ENCODE measurements at regions of chr1 and their contacts with region 1.

Region 1: DNA sequence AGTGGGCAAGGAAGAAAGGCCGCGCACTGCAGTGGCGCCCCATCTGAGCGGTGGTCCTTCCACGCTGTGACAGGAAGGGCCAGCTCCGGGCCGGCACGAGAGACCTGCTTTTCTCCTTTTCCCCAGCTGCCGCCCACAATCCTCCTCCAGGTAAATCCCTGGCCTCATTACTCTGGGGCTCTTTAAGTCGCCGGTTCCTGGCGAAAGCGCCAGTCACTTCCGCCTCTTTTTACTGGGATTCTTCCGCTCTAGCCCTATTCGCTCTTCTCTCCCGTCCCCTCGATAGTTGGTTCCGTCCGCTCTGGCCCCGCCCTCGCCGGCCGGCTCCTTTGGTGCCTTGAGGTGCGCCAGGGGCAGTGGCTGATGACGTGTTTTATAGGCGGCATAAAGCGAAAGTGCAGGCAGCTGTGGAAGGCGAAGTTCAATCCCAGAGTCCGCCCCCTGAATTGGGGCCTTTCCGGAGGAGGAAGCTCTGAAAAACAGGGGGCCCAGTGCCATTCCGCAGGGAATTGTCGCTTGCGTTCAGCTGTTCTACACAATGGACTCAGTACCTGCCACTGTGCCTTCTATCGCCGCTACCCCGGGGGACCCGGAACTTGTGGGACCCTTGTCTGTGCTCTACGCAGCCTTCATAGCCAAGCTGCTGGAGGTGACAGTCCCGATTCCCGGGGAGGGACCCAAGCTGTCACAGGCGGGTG is 26.2 kb downstream of the MIA3 start:
- DNase-seq: peak; percentile 96
- H3K4me3 ChIP-seq: peak overlapping the region; percentile 87
- H3K27ac ChIP-seq: peak overlapping the region; percentile 46
- H3K4me1 ChIP-seq: peaks cover 15% of the 10 kb centered on the region
- CTCF ChIP-seq: no peak

Region 2: GRCh38 chr1:222589462-222590302 is 54.4 kb before region 1 on chr1 and contains the start of gene TAF1A:
- CTCF ChIA-PET with region 1: no interaction called
- POLR2A ChIA-PET with region 1: interaction called, 13 read pairs
- intact Hi-C with region 1: loop called (anchors 1 kb)
- DNase-seq: peak; percentile 88
- H3K4me3 ChIP-seq: peak within 1 kb of the TSS; percentile 80
- H3K27ac ChIP-seq: peak within 1 kb of the TSS; percentile 43
- H3K4me1 ChIP-seq: peaks cover 20% of the 10 kb centered on the region
- CTCF ChIP-seq: no peak
- total RNA-seq, gene TAF1A: 10.9 and 13.3 TPM in 2 replicates

Region 3: DNA sequence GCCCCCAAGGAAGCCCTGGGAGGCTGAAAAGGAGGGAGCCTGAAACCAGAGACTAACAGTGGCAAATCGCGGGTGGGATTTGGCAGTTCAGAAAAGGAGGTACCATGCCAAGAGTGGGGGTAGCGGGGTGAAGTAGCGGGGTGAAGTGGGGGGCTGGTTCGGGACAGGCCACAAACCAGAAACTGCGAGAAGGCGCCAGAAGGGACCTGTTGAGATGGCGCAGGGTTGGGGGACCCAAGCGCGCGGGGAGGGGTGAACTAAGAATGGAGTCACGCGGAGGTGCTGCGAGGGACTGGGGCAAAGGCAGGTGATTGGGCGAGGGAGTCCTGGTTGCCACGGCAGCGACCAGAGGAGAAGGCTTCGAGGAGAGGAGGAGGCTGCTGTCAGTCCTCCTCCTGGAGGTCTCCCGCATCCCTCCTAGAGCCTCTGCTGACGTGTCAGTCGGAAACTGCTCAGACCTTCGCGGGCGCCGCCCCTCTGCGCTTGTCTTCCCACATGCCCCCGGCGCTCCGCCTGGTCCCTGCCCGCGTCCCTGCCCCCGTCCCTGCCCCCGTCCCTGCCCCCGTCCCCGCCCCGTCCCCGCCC is 26.6 kb before region 1 on chr1:
- CTCF ChIA-PET with region 1: no interaction called
- POLR2A ChIA-PET with region 1: interaction called, 6 read pairs
- intact Hi-C with region 1: loop called (anchors 2 kb)
- DNase-seq: peak; percentile 90
- H3K4me3 ChIP-seq: peak overlapping the region; percentile 73
- H3K27ac ChIP-seq: no peak overlapping the region
- H3K4me1 ChIP-seq: peaks cover 13% of the 10 kb centered on the region
- CTCF ChIP-seq: no peak